GM12878 (cell line): ENCODE measurements at regions of chr15 and their contacts with region 1.

Region 1: GRCh38 chr15:41331833-41332787 is at the start of gene OIP5:
- DNase-seq: peak; percentile 98
- ATAC-seq: peak; percentile 95
- H3K4me3 ChIP-seq: peak within 1 kb of the TSS; percentile 91
- H3K27ac ChIP-seq: peak within 1 kb of the TSS; percentile 99
- H3K4me1 ChIP-seq: no peaks in the 10 kb centered on the region; the same call in 1 of the 2 replicates
- H3K27me3 ChIP-seq: no peaks in the 10 kb centered on the region
- CTCF ChIP-seq: peak; percentile 57 to 62 (median 62); a peak in 5 of 6 replicates
- EP300 ChIP-seq: no peak
- POLR2A ChIP-seq: peak; percentile 97
- RAD21 ChIP-seq: peak; percentile 45; the same call in 1 of the 2 replicates
- polyA plus RNA-seq, gene OIP5: 4.8 to 13.0 TPM

Region 2: GRCh38 chr15:39860200-39860599 is 1471.9 kb before region 1 on chr15:
- CTCF ChIA-PET with region 1: no interaction called
- POLR2A ChIA-PET with region 1: no interaction called
- RAD21 ChIA-PET with region 1: no interaction called
- SMC1A ChIA-PET with region 1: no interaction called
- in situ Hi-C with region 1: no loop called
- intact Hi-C with region 1: no loop called
- DNase-seq: no peak
- ATAC-seq: no peak
- H3K4me3 ChIP-seq: no peak overlapping the region
- H3K27ac ChIP-seq: no peak overlapping the region
- H3K4me1 ChIP-seq: no peaks in the 10 kb centered on the region
- H3K27me3 ChIP-seq: no peaks in the 10 kb centered on the region; a peak in 1 of 4 replicates
- CTCF ChIP-seq: no peak
- EP300 ChIP-seq: no peak
- POLR2A ChIP-seq: no peak
- RAD21 ChIP-seq: no peak

Region 3: GRCh38 chr15:41116116-41116871 is 215.8 kb before region 1 on chr15 and contains the start of gene INO80:
- CTCF ChIA-PET with region 1: interaction called, 4 read pairs
- POLR2A ChIA-PET with region 1: no interaction called
- RAD21 ChIA-PET with region 1: no interaction called
- SMC1A ChIA-PET with region 1: interaction called, 4 read pairs
- in situ Hi-C with region 1: no loop called
- intact Hi-C with region 1: loop called (anchors 2 kb)
- DNase-seq: peak; percentile 94
- ATAC-seq: peak; percentile 83
- H3K4me3 ChIP-seq: peak within 1 kb of the TSS; percentile 79
- H3K27ac ChIP-seq: peak within 1 kb of the TSS; percentile 85
- H3K4me1 ChIP-seq: no peaks in the 10 kb centered on the region
- H3K27me3 ChIP-seq: no peaks in the 10 kb centered on the region
- CTCF ChIP-seq: no peak
- EP300 ChIP-seq: no peak
- POLR2A ChIP-seq: peak; percentile 82
- RAD21 ChIP-seq: no peak
- polyA plus RNA-seq, gene INO80: 4.5 to 5.0 TPM

Region 4: GRCh38 chr15:41230650-41231533 is 101.2 kb before region 1 on chr15 and contains the starts of genes CHP1 and EXD1:
- CTCF ChIA-PET with region 1: interaction called, 8 read pairs
- POLR2A ChIA-PET with region 1: interaction called, 4 read pairs
- RAD21 ChIA-PET with region 1: interaction called, 6 read pairs
- SMC1A ChIA-PET with region 1: interaction called, 6 read pairs
- in situ Hi-C with region 1: no loop called
- intact Hi-C with region 1: loop called (anchors 2 kb)
- DNase-seq: peak; percentile 87
- ATAC-seq: peak; percentile 99
- H3K4me3 ChIP-seq: peak within 1 kb of the TSS; percentile 86
- H3K27ac ChIP-seq: peak within 1 kb of the TSS; percentile 89
- H3K4me1 ChIP-seq: peaks cover 2% of the 10 kb centered on the region; the same call in 1 of the 2 replicates
- H3K27me3 ChIP-seq: no peaks in the 10 kb centered on the region
- CTCF ChIP-seq: peak; percentile 80 to 95 (median 90)
- EP300 ChIP-seq: 0 out of 4 replicates have a peak, but pooled peaks have one; percentile 5 to 9
- POLR2A ChIP-seq: peak; percentile 94
- RAD21 ChIP-seq: peak; percentile 13; the same call in 1 of the 2 replicates
- polyA plus RNA-seq, gene CHP1: 32.5 to 43.3 TPM
- polyA plus RNA-seq, gene EXD1: 0.19 TPM in 1 of 2 experiments, not detected in the other

Region 5: GRCh38 chr15:41283653-41284426 is 48.3 kb before region 1 on chr15:
- CTCF ChIA-PET with region 1: interaction called, 5 read pairs
- POLR2A ChIA-PET with region 1: interaction called, 8 read pairs
- RAD21 ChIA-PET with region 1: interaction called, 3 read pairs
- SMC1A ChIA-PET with region 1: interaction called, 10 read pairs
- in situ Hi-C with region 1: no loop called
- intact Hi-C with region 1: no loop called
- DNase-seq: peak; percentile 99
- ATAC-seq: peak; percentile 98
- H3K4me3 ChIP-seq: peak overlapping the region; percentile 76
- H3K27ac ChIP-seq: peak overlapping the region; percentile 95
- H3K4me1 ChIP-seq: peaks cover 6% of the 10 kb centered on the region
- H3K27me3 ChIP-seq: no peaks in the 10 kb centered on the region
- CTCF ChIP-seq: no peak
- EP300 ChIP-seq: 0 out of 4 replicates have a peak, but pooled peaks of 1 of the 2 experiments have one; percentile 12
- POLR2A ChIP-seq: peak; percentile 95
- RAD21 ChIP-seq: no peak

Region 6: DNA sequence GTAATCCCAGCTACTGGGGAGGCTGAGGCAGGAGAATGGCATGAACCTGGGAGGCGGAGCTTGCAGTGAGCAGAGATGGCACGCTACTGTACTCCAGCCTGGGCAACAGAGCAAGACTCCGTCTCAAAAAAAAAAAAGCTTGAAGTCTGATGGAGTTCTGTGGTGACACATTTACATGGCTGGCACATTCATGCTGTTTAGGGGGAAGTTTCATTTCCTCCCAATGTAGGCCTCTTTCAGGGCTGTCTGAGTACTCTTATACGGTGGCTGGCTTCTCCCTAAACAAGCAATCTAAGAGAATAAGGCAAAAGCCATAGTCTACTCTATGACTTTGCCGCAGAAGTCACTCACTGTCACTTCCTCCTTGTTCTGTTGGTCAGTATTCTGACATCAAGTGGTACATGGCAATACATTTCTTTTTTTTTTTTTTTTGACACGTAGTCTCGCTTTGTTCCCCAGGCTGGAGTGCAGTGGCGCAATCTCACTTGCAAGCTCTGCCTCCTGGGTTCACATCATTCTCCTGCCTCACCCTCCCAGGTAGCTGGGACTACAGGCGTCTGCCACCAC is 41.0 kb before region 1 on chr15:
- CTCF ChIA-PET with region 1: interaction called, 16 read pairs
- POLR2A ChIA-PET with region 1: interaction called, 11 read pairs
- RAD21 ChIA-PET with region 1: interaction called, 4 read pairs
- SMC1A ChIA-PET with region 1: interaction called, 6 read pairs
- in situ Hi-C with region 1: no loop called
- intact Hi-C with region 1: loop called (anchors 2 kb)
- DNase-seq: peak; percentile 84
- ATAC-seq: peak; percentile 92
- H3K4me3 ChIP-seq: no peak overlapping the region
- H3K27ac ChIP-seq: peak overlapping the region; percentile 56
- H3K4me1 ChIP-seq: peaks cover 13% of the 10 kb centered on the region
- H3K27me3 ChIP-seq: no peaks in the 10 kb centered on the region
- CTCF ChIP-seq: no peak
- EP300 ChIP-seq: peak in 1 of 2 experiments; percentile 32; a peak in 1 of 4 replicates
- POLR2A ChIP-seq: no peak
- RAD21 ChIP-seq: no peak

Region 7: GRCh38 chr15:41367418-41367817 is 35.3 kb after region 1 on chr15:
- CTCF ChIA-PET with region 1: no interaction called
- POLR2A ChIA-PET with region 1: no interaction called
- RAD21 ChIA-PET with region 1: no interaction called
- SMC1A ChIA-PET with region 1: no interaction called
- in situ Hi-C with region 1: no loop called
- intact Hi-C with region 1: no loop called
- DNase-seq: no peak
- ATAC-seq: no peak
- H3K4me3 ChIP-seq: no peak overlapping the region
- H3K27ac ChIP-seq: no peak overlapping the region
- H3K4me1 ChIP-seq: no peaks in the 10 kb centered on the region
- H3K27me3 ChIP-seq: no peaks in the 10 kb centered on the region
- CTCF ChIP-seq: no peak
- EP300 ChIP-seq: no peak
- POLR2A ChIP-seq: no peak
- RAD21 ChIP-seq: no peak

Region 8: GRCh38 chr15:41512940-41513510 is 180.9 kb after region 1 on chr15:
- CTCF ChIA-PET with region 1: no interaction called
- POLR2A ChIA-PET with region 1: interaction called, 13 read pairs
- RAD21 ChIA-PET with region 1: no interaction called
- SMC1A ChIA-PET with region 1: no interaction called
- in situ Hi-C with region 1: no loop called
- intact Hi-C with region 1: no loop called
- DNase-seq: no peak
- ATAC-seq: peak; percentile 64
- H3K4me3 ChIP-seq: peak overlapping the region; percentile 67
- H3K27ac ChIP-seq: no peak overlapping the region
- H3K4me1 ChIP-seq: peaks cover 23% of the 10 kb centered on the region
- H3K27me3 ChIP-seq: peaks cover 5 to 20% of the 10 kb centered on the region in 2 experiments
- CTCF ChIP-seq: no peak
- EP300 ChIP-seq: no peak
- POLR2A ChIP-seq: no peak
- RAD21 ChIP-seq: no peak

Region 9: DNA sequence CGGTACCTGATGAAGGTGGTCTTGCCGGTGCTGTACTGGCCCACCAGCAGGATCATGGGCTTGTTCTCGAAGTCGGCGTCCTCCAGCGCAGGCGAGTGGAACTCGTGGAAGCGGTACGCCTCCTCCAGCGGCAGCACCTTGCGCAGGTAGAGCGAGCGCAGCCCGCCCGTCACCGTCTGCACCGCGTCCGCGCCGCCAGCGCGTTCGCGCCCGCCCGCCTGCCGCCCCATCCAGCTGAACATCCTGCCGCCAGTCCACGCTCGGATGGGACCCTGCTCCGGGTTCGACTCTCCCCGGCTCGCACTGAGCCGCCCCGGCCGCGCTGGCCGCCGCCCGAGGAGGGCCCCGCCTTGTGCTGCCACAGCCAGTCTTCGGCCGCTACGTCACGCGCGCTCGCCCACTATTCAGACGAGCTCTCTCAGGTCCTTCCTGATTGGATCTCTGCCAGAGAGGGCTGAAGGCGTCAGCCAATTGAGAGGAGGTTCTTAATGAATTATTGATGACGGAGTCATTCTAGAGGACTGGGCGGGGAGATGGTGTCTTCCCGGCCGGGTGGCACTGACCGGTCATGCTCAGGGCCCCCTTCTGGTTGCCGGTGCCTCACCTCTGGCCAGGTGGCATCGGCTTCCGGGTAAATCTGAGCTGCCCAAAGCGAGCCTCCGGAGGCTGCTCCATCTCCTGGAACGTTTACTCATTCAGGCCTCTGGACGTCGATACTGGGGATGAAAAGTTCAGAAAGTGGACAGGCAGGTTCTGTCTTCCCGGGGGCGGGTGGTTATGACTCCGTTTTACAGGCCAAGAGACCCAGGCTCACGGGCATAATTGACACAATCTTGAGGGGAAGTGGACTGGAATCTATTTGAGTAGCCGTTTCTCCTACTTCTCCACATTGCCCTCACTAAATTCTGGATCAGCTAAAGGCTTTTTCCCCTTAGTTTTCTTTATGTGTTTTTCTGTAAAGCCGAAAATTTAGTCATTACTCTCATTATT is 640.4 kb after region 1 on chr15 and contains the start of gene EHD4:
- CTCF ChIA-PET with region 1: no interaction called
- POLR2A ChIA-PET with region 1: no interaction called
- RAD21 ChIA-PET with region 1: no interaction called
- SMC1A ChIA-PET with region 1: no interaction called
- in situ Hi-C with region 1: no loop called
- intact Hi-C with region 1: loop called (anchors 5 kb)
- DNase-seq: peak; percentile 92
- ATAC-seq: peak; percentile 78
- H3K4me3 ChIP-seq: peak within 1 kb of the TSS; percentile 93
- H3K27ac ChIP-seq: peak within 1 kb of the TSS; percentile 100
- H3K4me1 ChIP-seq: peaks cover 24% of the 10 kb centered on the region
- H3K27me3 ChIP-seq: no peaks in the 10 kb centered on the region
- CTCF ChIP-seq: peak in 2 of 3 experiments; percentile 34 to 38; a peak in 3 of 6 replicates
- EP300 ChIP-seq: 0 out of 4 replicates have a peak, but pooled peaks of 1 of the 2 experiments have one; percentile 11
- POLR2A ChIP-seq: peak; percentile 96
- RAD21 ChIP-seq: no peak; the same call in 1 of the 2 replicates
- polyA plus RNA-seq, gene EHD4: 4.2 to 8.6 TPM